Activated CD8-positive, alpha-beta memory T cell treated with anti-CD3 and anti-CD28 coated beads, Interleukin-2, amount 10 ng/mL, durations not matched to agents 7 days and 5 days (primary cell): ENCODE measurements at regions of chr7 and their contacts with region 1.

Region 1: DNA sequence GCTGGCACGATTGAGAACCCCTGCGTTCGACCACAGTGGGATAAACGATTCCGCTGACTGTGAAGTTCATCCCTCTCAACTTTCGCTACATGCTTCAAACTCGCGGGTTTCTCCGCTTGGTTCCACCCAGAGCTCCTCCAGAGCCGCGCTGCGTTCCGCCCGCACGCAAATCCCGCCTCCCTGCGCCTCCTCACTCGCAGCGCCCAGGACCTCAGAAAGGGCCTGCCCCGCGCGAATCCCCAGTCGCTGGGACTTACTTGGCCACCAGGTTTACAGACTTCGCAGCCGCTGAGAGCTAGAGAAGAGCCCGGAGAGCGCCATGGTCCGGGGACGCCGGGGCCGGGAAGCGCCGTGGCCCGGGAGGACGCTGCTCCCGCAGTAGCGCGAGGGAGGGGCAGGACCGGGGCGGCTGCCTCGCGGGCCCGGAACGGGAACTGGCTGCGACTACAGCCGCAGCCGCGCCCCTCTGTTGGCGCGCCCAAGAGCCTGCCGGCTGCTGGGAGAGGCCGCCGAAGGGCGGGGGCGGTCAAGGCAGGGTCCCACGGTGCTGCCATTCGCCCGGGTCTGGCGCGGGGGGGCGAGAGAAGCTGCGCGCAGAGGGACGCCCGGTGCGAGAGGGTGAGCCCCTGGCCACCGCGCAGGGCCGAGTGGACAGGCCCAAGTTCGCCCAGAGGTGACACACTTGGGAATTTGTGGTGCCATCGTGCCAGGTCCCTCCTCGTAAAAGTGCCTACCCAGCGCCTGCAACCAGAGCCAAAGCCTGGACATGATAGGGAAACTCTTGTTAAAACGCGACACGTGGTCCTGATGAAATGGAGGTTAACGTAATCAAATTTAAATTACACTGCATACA is at the start of gene NOD1:
- DNase-seq: peak; percentile 80
- ATAC-seq: peak; percentile 98
- H3K4me3 Mint-ChIP-seq: peak within 1 kb of the TSS; percentile 87
- H3K27ac Mint-ChIP-seq: peak within 1 kb of the TSS; percentile 91
- H3K4me1 Mint-ChIP-seq: peaks cover 48% of the 10 kb centered on the region
- H3K27me3 Mint-ChIP-seq: no peaks in the 10 kb centered on the region
- total RNA-seq, gene NOD1: 20.8 to 36.9 TPM

Region 2: DNA sequence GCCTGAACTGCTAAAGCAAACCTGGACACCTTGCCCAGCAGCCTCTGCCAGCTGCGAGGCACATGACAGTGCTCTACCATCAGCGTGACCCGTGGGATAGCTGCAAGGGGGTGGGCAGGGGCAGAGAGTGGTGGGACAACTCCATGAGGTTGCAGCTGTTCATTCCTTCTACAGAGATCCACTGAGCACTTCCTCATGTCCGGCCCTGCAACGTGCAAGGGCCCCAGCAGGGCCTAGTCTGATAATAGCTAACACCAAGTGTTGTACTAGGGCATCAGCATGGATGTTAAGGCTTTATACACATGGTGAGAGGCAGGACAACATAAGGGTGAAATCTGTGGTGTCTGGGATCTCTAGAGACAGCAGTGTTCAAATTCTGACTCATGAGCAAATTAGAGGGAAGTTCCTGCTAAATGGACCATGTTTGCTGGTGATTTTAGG is 14.3 kb before region 1 on chr7:
- CTCF ChIA-PET with region 1: interaction called, 10 read pairs
- DNase-seq: no peak
- ATAC-seq: no peak
- H3K4me3 Mint-ChIP-seq: no peak overlapping the region
- H3K27ac Mint-ChIP-seq: no peak overlapping the region
- H3K4me1 Mint-ChIP-seq: peaks cover 37% of the 10 kb centered on the region
- H3K27me3 Mint-ChIP-seq: no peaks in the 10 kb centered on the region